GM10248 (cell line): ENCODE measurements at regions of chr3 and their contacts with region 1.

Region 1: DNA sequence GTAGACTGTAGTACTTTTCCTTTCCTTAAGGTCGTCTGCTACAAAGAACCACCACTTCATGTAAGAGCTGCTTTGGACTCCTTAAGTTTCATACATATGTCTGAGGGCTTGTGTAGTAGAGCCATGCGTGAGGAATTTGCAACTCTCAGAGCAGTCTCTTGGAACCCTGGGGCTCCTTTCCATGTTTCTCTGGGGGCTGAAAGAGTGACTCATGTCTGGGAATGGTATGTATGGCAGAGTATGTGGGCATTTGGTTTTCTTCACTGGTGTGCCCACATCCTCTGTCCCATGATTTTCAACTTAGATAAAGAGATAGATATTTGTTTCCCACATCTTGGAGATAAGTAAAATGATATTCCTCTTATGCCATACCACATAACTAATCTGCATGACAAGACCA is 20.6 kb upstream of the RBM5 start:
- DNase-seq: no peak
- CTCF ChIP-seq: no peak

Region 2: DNA sequence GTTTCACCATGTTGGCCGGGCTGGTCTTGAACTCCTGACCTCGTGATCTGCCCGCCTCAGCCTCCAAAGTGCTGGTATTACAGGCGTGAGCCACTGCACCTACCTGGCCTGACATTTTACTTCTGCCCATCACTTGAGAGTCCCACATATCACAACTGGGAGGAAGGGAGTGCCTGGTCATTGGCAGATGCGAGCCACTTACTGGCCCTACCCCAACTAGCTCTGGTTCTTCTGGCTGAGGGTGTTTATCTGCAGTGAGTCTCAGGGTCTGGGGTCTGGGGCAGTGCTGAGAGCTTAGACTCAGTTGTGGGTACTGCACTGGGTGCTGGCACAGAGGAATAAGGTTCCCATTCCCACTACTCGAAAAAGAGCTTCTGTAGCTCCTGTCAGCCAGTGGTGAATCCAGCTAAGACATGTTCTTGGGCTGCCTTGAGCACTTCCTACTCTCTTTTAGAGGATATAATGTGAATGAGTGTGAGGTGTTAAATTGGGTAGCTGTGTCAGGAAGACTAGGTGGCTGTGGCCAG is 567.9 kb before region 1 on chr3:
- CTCF ChIA-PET with region 1: no interaction called
- POLR2A ChIA-PET with region 1: no interaction called
- DNase-seq: no peak
- CTCF ChIP-seq: no peak

Region 3: GRCh38 chr3:50057756-50058155 is 10.4 kb before region 1 on chr3:
- CTCF ChIA-PET with region 1: interaction called, 11 read pairs
- POLR2A ChIA-PET with region 1: no interaction called
- DNase-seq: no peak
- CTCF ChIP-seq: no peak